ENCODE measurements at regions of chr11 and their contacts with region 1.

Region 1: DNA sequence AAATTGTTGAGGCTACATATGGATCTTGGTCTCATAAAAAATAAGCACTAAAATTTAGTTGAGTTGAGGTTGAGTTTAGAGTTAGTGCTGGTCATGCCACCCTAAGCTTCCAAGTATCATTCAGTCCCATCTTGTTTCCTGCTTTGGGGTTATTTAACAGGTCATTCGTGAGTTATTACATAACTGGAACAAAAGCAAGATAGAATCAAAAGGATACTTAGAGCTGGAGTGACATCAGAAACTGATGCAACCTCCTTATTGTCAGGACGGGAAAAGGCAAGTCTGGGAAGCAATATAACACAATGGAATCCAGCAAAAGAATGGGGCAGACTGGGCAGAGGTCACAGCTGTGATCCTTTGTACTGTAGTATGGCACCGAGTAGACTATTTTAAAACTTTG is 4.5 kb upstream of the PRSS23 start:
- DNase-seq: peak; percentile 85
- H3K4me3 ChIP-seq: no peak overlapping the region
- H3K27ac ChIP-seq: peak overlapping the region; percentile 44
- H3K4me1 ChIP-seq: peaks cover 12% of the 10 kb centered on the region
- H3K27me3 ChIP-seq: no peaks in the 10 kb centered on the region
- CTCF ChIP-seq: no peak
- POLR2A ChIP-seq: no peak

Region 2: GRCh38 chr11:86765894-86766293 is 30.0 kb before region 1 on chr11:
- CTCF ChIA-PET with region 1: interaction called, 3 read pairs
- POLR2A ChIA-PET with region 1: no interaction called
- dilution Hi-C with region 1: no loop called
- intact Hi-C with region 1: loop called (anchors 2 kb)
- DNase-seq: no peak
- H3K4me3 ChIP-seq: no peak overlapping the region
- H3K27ac ChIP-seq: no peak overlapping the region
- H3K4me1 ChIP-seq: no peaks in the 10 kb centered on the region
- H3K27me3 ChIP-seq: no peaks in the 10 kb centered on the region
- CTCF ChIP-seq: no peak
- POLR2A ChIP-seq: no peak

Region 3: DNA sequence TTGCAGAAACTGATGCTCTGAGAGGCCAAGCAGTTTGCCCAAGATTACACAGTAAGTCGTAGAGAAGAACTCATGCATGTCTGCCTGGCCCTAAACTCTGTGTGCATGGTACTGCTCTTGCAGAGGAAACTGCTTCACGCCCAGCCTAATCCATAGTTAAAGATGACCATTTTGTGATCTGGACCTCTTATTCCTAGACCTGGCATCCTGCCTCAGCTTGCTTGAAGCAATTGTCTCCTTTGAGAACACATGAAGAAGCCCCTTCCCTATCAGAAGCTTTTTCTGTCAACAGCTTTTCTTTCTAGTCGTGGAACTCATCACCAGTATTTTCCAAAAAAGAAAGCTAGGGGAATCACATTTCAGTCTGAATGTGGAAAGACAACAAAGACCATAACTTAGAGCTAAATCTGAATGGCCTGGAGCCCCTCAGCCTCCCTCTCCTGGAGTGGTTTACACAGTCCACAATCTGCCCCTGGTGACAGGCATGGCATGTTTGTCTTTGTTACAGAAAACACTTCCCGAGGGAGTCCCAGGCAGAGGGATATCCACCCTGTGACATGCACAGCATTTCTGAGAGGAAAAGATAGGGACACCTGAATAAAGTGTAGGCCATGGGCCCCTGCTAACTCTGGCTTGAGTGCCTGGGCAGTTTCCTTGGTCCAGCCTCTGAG is 162.2 kb after region 1 on chr11:
- CTCF ChIA-PET with region 1: no interaction called
- POLR2A ChIA-PET with region 1: no interaction called
- dilution Hi-C with region 1: no loop called
- intact Hi-C with region 1: no loop called
- DNase-seq: no peak
- H3K4me3 ChIP-seq: no peak overlapping the region
- H3K27ac ChIP-seq: no peak overlapping the region
- H3K4me1 ChIP-seq: peaks cover 9% of the 10 kb centered on the region
- H3K27me3 ChIP-seq: no peaks in the 10 kb centered on the region
- CTCF ChIP-seq: no peak
- POLR2A ChIP-seq: no peak

Region 4: GRCh38 chr11:87281496-87281895 is 485.6 kb after region 1 on chr11:
- CTCF ChIA-PET with region 1: no interaction called
- POLR2A ChIA-PET with region 1: no interaction called
- dilution Hi-C with region 1: no loop called
- intact Hi-C with region 1: no loop called
- DNase-seq: peak; percentile 96
- H3K4me3 ChIP-seq: no peak overlapping the region
- H3K27ac ChIP-seq: no peak overlapping the region
- H3K4me1 ChIP-seq: peaks cover 9% of the 10 kb centered on the region
- H3K27me3 ChIP-seq: no peaks in the 10 kb centered on the region
- CTCF ChIP-seq: peak in 1 of 2 donors; percentile 22
- POLR2A ChIP-seq: no peak